ENCODE measurements at regions of chr9 and their contacts with region 1.

Region 1: DNA sequence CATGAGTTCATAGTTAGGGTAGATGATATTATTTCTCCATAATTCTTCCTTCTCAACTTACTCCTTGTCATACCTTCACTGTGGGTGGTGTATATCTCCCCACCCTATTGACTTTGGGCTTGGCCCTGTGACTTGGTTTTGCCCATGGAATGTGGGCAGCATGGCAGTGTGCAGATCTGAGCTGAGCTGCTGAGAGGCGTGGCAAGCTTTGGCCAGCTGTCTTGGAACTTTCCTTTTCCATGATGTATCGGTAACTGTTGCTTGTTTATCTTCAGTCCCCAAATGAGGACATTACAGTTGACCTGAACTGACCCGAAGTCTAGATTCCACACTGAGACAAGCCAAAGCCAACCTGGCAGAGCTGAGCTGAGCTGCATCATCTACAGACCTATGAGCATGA is 70.4 kb downstream of the RALGPS1 start:
- DNase-seq: no peak

Region 2: DNA sequence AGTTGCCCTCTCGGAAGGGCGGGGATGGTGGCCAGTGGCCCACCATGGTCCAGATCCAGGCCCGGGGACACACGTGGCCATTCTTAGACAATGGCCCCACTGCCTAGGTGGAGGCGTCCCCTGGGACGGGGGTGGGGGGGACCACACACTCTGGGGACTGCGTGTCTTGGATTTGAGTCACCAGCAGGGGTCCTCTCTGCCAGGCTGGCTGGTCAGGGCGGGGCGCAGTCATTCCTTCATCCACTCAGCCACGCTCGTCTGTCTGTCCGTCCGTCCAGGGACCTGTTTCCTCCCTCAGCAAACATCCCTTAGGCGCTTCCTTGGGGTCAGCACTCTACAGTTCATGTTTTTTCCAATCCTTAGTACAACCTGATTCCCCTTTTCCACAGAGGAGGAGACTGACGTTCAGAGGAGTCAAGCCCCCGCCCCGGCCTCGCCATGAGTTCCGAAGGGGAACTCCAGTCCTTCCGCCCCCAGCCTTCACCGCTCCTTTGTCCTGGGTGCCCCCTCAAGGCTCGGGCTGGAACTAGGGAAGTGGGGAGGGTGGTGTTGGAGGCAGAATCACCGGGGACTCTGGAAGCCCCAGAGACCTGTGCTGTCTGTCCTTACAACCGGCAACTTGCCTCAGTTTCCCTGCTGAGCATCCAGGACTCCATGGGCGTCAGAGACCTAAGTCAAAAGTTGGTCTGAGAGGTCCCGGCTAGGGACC is 934.9 kb before region 1 on chr9:
- intact Hi-C with region 1: loop called in 1 of 2 experiments (anchors 5 kb)
- DNase-seq: peak; percentile 45

Region 3: DNA sequence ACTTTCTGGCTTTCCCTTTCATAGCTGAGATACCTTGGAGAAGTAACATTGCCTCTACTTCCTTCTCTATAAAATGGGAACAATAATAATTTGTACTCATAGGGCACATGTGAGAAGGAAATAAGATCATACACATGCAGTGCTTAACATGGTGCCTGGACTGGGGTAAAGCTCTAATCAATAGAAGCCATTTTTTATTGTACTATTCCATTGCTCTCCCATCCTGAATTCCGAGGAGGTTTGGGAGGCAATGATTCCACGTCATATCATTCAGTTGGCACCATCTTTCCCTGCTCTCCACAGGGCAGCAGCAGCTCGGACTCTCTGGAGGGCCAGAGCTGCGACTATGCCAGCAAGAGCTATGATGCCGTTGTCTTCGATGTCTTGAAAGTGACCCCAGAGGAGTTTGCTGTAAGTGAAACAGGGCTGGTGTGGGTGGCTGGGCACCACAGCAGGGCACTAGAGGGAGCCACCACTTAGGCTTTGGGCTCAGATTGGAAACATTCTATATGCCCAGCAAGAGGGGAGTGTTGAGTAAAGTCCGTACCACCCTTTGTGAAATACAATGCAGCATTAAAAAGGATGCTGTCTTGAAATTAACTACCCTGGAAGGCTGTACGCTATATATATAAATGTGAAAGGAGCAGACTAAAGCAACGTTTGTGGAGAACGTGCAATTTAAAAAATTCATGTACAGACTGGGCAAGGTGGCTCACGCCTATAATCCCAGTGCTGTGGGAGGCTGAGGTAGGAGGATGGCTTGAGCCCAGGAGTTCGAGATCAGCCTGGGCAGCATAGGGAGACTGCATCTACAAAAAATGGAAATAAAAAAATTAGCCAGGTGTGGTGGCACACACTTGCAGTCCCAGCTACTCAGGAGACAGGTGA is 19.2 kb before region 1 on chr9:
- intact Hi-C with region 1: no loop called
- DNase-seq: no peak

Measured in posterior vena cava (tissue), 2 donors.